Activated T-helper 2 cell treated with anti-CD3 and anti-CD28 coated beads, Interferon-gamma antibody, Interleukin-2, Interleukin-4, amounts not matched to agents 10 μg/mL and 5 μg/mL and 100 μg/mL, durations not matched to agents 14 hours and 24 hours and 36 hours (primary cell): ENCODE measurements at regions of chr18 and their contacts with region 1.

Region 1: GRCh38 chr18:57621246-57621604 is 411 bp downstream of the NARS1 start:
- DNase-seq: no peak
- H3K4me3 Mint-ChIP-seq: peak overlapping the region; percentile 95
- H3K27ac Mint-ChIP-seq: peak overlapping the region; percentile 97
- H3K4me1 Mint-ChIP-seq: peaks cover 11% of the 10 kb centered on the region
- H3K27me3 Mint-ChIP-seq: no peaks in the 10 kb centered on the region

Region 2: DNA sequence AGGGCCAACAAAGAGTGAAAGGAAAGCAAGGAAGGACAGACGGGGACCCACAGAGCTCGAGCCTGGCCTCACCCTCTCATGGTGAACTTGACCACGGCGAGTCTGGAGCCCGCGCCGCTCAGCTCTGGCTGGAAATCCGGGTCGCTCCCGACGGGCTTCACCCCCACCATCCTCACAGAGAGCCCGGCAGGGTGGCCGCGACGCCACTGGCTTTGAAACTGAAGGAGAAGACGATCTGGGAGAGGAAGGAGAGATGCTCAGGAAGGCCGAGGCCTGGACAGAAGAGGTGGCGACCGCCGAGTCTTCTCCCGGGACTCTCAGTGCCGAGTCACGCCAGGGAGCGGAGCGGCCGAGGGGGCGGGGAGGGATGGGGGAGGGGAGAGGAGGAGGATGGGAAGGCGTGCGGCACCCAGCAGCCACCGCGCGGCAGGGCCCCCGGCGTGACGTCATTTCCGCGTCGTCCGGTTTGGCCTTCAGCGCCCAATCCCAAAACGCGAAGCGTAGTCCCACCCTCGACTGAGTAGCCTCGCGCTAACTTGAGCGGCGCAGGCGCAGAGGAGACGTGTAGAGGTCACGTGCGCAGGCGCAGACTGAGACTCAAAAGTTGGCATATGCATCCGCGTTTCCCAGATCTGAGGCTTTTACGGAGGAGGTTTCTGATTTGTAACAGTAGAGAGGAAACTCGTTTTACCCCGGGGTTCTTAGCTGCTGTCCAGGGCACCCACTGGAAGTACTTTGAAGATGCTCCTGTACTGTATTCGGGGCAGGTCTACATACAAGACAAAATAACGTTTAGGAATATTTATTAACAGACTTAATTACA is 982.7 kb before region 1 on chr18 and contains the start of gene TXNL1:
- intact Hi-C with region 1: loop called (anchors 5 kb)
- DNase-seq: peak; percentile 98
- H3K4me3 Mint-ChIP-seq: peak within 1 kb of the TSS; percentile 99
- H3K27ac Mint-ChIP-seq: peak within 1 kb of the TSS; percentile 87
- H3K4me1 Mint-ChIP-seq: peaks cover 36% of the 10 kb centered on the region
- H3K27me3 Mint-ChIP-seq: no peaks in the 10 kb centered on the region
- total RNA-seq, gene TXNL1: 95.1 and 96.3 TPM in 2 replicates

Region 3: DNA sequence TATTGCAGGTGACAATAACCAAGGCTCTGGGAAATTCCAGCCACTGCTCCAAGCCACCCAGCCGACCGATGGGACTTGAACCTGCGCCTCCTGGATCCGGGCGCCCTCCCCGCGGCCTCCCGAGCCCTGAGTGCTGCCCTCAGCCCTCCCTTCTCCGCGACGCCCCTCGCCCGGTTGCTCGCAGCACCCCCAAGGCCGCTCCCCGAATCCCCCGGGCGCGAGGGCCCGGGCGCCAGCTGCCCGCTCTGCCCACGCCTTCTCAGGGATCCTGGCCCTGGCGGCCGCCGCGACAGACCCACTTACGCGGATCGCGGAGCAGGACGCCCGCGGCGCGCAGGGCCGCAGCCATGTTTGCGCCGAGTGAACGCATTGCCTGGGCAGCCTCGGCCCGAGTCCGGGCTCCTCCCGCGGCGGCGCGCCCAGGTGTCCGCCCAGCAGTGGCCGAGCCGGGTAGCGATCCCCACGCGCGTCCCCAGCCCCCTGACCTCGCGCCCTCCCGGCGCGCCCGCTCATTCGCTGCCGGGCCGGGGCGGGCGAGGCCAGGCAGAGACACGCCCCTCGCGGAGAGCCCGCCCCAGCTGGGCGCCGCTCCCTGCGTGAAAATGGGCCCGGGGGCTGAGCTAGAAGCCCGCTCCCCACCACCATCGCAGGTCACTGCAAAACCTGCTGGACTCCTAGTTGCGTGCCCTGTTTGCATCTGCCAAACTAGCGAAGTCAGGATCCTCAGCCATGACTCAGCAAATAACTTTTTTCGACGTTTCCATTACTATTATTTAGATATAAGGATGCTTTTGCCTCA is 34.8 kb before region 1 on chr18 and contains the start of gene FECH:
- intact Hi-C with region 1: loop called (anchors 1 kb)
- DNase-seq: peak; percentile 66
- H3K4me3 Mint-ChIP-seq: peak within 1 kb of the TSS; percentile 87
- H3K27ac Mint-ChIP-seq: peak within 1 kb of the TSS; percentile 67
- H3K4me1 Mint-ChIP-seq: peaks cover 16% of the 10 kb centered on the region
- H3K27me3 Mint-ChIP-seq: no peaks in the 10 kb centered on the region
- total RNA-seq, gene FECH: 17.4 and 21.9 TPM in 2 replicates

Region 4: GRCh38 chr18:57754577-57755338 is 133.5 kb after region 1 on chr18:
- intact Hi-C with region 1: loop called (anchors 10 kb)
- DNase-seq: no peak
- H3K4me3 Mint-ChIP-seq: no peak overlapping the region
- H3K27ac Mint-ChIP-seq: no peak overlapping the region
- H3K4me1 Mint-ChIP-seq: peaks cover 9% of the 10 kb centered on the region
- H3K27me3 Mint-ChIP-seq: no peaks in the 10 kb centered on the region